Naive thymus-derived CD4-positive, alpha-beta T cell (primary cell): ENCODE measurements at regions of chr1 and their contacts with region 1.

Region 1: GRCh38 chr1:10694633-10695627 is 101.5 kb downstream of the CASZ1 start:
- DNase-seq: peak; percentile 60 to 82 (median 71)
- ATAC-seq: peak; percentile 81
- H3K4me3 ChIP-seq: peak overlapping the region; percentile 41
- H3K4me3 Mint-ChIP-seq: peak overlapping the region; percentile 74 to 87 (median 84)
- H3K27ac ChIP-seq: peak overlapping the region; percentile 58
- H3K27ac Mint-ChIP-seq: peak overlapping the region in 6 of 9 donors; percentile 71 to 92 (median 81)
- H3K4me1 ChIP-seq: peaks cover 10 to 15% of the 10 kb centered on the region in 2 donors
- H3K4me1 Mint-ChIP-seq: peaks cover 14 to 20% (median 16%) of the 10 kb centered on the region in 7 donors
- H3K27me3 ChIP-seq: no peaks in the 10 kb centered on the region
- H3K27me3 Mint-ChIP-seq: peaks cover 0 to 21% (median 0%) of the 10 kb centered on the region in 5 donors

Region 2: GRCh38 chr1:9128520-9129265 is 1566.2 kb before region 1 on chr1 and contains the start of gene GPR157:
- CTCF ChIA-PET with region 1: no interaction called
- POLR2A ChIA-PET with region 1: no interaction called
- intact Hi-C with region 1: loop called in 1 of 2 experiments (anchors 5 kb)
- DNase-seq: peak; percentile 53 to 82 (median 70)
- ATAC-seq: peak; percentile 95
- H3K4me3 ChIP-seq: peak within 1 kb of the TSS; percentile 67
- H3K4me3 Mint-ChIP-seq: peak within 1 kb of the TSS; percentile 85 to 95 (median 90)
- H3K27ac ChIP-seq: peak within 1 kb of the TSS; percentile 67
- H3K27ac Mint-ChIP-seq: peak within 1 kb of the TSS; percentile 59 to 94 (median 87)
- H3K4me1 ChIP-seq: peaks cover 8 to 24% of the 10 kb centered on the region in 2 donors
- H3K4me1 Mint-ChIP-seq: peaks cover 19 to 40% (median 32%) of the 10 kb centered on the region in 7 donors
- H3K27me3 ChIP-seq: no peaks in the 10 kb centered on the region
- H3K27me3 Mint-ChIP-seq: peaks cover 0 to 25% (median 0%) of the 10 kb centered on the region in 5 donors
- total RNA-seq, gene GPR157: 4.0 to 14.1 (median 5.9) TPM

Region 3: GRCh38 chr1:10398734-10399623 is 296.0 kb before region 1 on chr1 and contains the start of gene PGD:
- CTCF ChIA-PET with region 1: no interaction called
- POLR2A ChIA-PET with region 1: no interaction called
- intact Hi-C with region 1: loop called in 1 of 2 experiments (anchors 1 kb)
- DNase-seq: peak; percentile 87 to 98 (median 94)
- ATAC-seq: peak; percentile 99
- H3K4me3 ChIP-seq: peak within 1 kb of the TSS; percentile 95
- H3K4me3 Mint-ChIP-seq: peak within 1 kb of the TSS; percentile 87 to 97 (median 96)
- H3K27ac ChIP-seq: peak within 1 kb of the TSS; percentile 86
- H3K27ac Mint-ChIP-seq: peak within 1 kb of the TSS; percentile 63 to 94 (median 82)
- H3K4me1 ChIP-seq: peaks cover 4 to 7% of the 10 kb centered on the region in 2 donors
- H3K4me1 Mint-ChIP-seq: peaks cover 10 to 30% (median 25%) of the 10 kb centered on the region in 7 donors
- H3K27me3 ChIP-seq: no peaks in the 10 kb centered on the region
- H3K27me3 Mint-ChIP-seq: no peaks in the 10 kb centered on the region
- total RNA-seq, gene PGD: 42.0 to 110 (median 48.5) TPM

Region 4: DNA sequence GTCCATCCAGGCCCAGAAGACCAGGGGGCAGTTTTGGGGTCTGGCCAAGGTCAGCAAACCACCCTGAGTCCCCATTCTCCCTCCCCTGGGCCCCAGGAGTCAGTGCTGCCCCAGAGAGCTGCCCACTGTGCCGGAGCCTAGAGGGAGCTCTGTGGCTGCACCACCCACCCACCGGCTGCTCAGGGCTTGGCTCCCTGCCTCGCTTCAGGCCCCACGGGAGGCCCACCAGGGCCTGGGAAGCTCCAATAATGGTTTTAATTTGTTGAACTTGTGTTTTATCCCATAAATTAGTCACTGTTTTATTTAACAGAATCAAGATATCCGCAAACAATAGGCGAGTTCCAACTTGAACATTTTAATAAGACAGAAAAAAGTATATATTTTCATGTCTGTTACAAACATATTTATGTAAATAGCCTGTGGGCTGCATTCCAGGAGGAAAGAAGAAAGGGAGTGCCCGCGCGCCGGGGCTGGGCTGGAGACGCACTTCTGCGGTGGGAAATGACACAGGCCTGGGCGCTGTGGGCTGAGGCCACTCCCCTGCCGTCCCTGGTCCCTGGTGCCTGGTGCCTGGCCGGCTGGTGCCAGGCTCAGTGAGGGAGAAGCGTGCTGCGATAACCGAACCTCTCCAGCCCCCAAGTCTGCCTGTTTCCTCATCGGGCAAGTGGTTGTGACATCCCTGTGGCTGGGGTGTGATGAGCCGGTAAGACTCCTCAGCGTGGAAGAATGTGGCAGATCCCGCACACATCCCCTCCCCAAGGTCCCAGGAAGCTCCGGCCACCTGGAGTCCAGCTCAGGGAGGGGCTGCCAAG is 59.6 kb before region 1 on chr1:
- CTCF ChIA-PET with region 1: no interaction called
- POLR2A ChIA-PET with region 1: no interaction called
- intact Hi-C with region 1: no loop called
- DNase-seq: no peak
- ATAC-seq: no peak
- H3K4me3 ChIP-seq: no peak overlapping the region
- H3K4me3 Mint-ChIP-seq: no peak overlapping the region
- H3K27ac ChIP-seq: no peak overlapping the region
- H3K27ac Mint-ChIP-seq: no peak overlapping the region
- H3K4me1 ChIP-seq: peaks cover 0 to 4% of the 10 kb centered on the region in 2 donors
- H3K4me1 Mint-ChIP-seq: peaks cover 0 to 8% (median 3%) of the 10 kb centered on the region in 7 donors
- H3K27me3 ChIP-seq: no peaks in the 10 kb centered on the region
- H3K27me3 Mint-ChIP-seq: peaks cover 0 to 11% (median 0%) of the 10 kb centered on the region in 5 donors

Region 5: DNA sequence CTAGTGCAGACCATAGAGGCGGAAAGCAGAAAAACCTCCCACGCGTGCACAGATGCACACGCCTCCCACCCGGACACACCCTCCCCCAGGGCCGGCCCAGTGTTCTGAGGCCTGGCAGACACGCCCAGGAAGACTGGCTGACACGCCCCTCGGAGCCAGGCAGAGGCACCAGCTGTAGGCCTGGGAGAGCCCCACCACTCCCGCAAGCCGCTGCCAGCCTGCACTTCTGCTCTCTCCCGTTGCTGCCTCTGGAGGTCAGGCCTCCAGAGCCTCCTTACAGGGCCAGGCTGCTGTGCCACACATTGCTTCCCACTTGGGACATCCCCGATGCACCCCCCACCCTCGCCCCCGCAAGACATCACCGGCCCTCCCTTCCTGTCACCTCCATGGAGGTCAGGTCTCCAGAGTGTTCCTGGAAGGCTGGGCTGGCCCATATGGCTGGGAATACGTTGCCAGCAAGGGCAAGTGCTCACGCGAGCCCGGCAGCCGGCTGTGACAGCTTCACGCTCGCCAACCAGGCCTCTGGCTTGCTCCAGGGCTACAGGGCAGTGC is 61.1 kb after region 1 on chr1:
- CTCF ChIA-PET with region 1: no interaction called
- POLR2A ChIA-PET with region 1: no interaction called
- intact Hi-C with region 1: loop called in 1 of 2 experiments (anchors 2 kb)
- DNase-seq: peak; percentile 43 to 78 (median 72)
- ATAC-seq: peak; percentile 97
- H3K4me3 ChIP-seq: no peak overlapping the region
- H3K4me3 Mint-ChIP-seq: peak overlapping the region in 5 of 10 donors; percentile 10 to 53 (median 46)
- H3K27ac ChIP-seq: no peak overlapping the region
- H3K27ac Mint-ChIP-seq: peak overlapping the region in 1 of 9 donors; percentile 24
- H3K4me1 ChIP-seq: peaks cover 3 to 8% of the 10 kb centered on the region in 2 donors
- H3K4me1 Mint-ChIP-seq: peaks cover 0 to 25% (median 5%) of the 10 kb centered on the region in 7 donors
- H3K27me3 ChIP-seq: no peaks in the 10 kb centered on the region
- H3K27me3 Mint-ChIP-seq: peaks cover 0 to 5% (median 0%) of the 10 kb centered on the region in 5 donors

Region 6: GRCh38 chr1:10779201-10779600 is 84.3 kb after region 1 on chr1:
- CTCF ChIA-PET with region 1: no interaction called
- POLR2A ChIA-PET with region 1: no interaction called
- intact Hi-C with region 1: no loop called
- DNase-seq: no peak
- ATAC-seq: no peak
- H3K4me3 ChIP-seq: no peak overlapping the region
- H3K4me3 Mint-ChIP-seq: no peak overlapping the region
- H3K27ac ChIP-seq: no peak overlapping the region
- H3K27ac Mint-ChIP-seq: no peak overlapping the region
- H3K4me1 ChIP-seq: no peaks in the 10 kb centered on the region
- H3K4me1 Mint-ChIP-seq: no peaks in the 10 kb centered on the region
- H3K27me3 ChIP-seq: no peaks in the 10 kb centered on the region
- H3K27me3 Mint-ChIP-seq: peaks cover 0 to 2% (median 0%) of the 10 kb centered on the region in 5 donors

Region 7: GRCh38 chr1:10941891-10942541 is 247.1 kb after region 1 on chr1:
- CTCF ChIA-PET with region 1: interaction called, 3 read pairs
- POLR2A ChIA-PET with region 1: no interaction called
- intact Hi-C with region 1: loop called (anchors 1 to 2 kb)
- DNase-seq: peak; percentile 23 to 75 (median 53)
- ATAC-seq: peak; percentile 78
- H3K4me3 ChIP-seq: no peak overlapping the region
- H3K4me3 Mint-ChIP-seq: peak overlapping the region in 1 of 10 donors; percentile 21
- H3K27ac ChIP-seq: no peak overlapping the region
- H3K27ac Mint-ChIP-seq: no peak overlapping the region
- H3K4me1 ChIP-seq: peaks cover 11 to 29% of the 10 kb centered on the region in 2 donors
- H3K4me1 Mint-ChIP-seq: peaks cover 20 to 49% (median 32%) of the 10 kb centered on the region in 7 donors
- H3K27me3 ChIP-seq: no peaks in the 10 kb centered on the region
- H3K27me3 Mint-ChIP-seq: peaks cover 19 to 72% (median 21%) of the 10 kb centered on the region in 5 donors

Region 8: DNA sequence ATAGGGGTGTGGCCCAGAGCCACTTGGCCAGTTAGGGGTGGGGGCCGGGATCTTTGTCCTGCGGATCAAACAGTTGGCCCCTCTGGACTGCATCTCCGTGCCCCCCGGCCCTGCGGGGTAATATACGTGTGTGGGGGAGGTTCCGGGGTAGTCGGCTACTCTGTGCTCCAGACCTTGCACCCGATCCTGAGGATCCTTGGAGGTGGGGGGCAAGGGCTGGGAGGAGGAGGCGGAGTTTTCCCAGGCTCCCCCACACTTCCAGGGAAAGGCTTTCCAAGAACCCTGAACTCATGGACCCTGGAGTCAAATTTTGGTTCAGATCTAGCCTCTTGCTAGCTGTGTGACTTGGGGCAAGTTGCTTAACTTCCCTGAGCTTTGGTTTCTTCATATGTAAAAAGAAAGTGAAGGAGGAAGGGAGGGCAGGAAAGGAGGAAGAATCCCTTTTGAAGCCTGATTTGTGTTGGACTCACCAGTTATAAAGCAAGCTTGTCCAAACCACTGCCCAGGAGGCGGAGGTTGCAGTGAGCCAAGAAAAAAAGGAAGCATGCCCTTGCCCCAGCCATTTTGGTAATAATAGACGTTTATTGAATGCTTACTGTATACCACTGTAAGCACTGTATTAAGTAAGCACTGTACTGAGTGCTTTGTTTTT is 1325.1 kb after region 1 on chr1:
- CTCF ChIA-PET with region 1: no interaction called
- POLR2A ChIA-PET with region 1: no interaction called
- intact Hi-C with region 1: loop called in 1 of 2 experiments (anchors 10 kb)
- DNase-seq: no peak
- ATAC-seq: no peak
- H3K4me3 ChIP-seq: peak overlapping the region; percentile 77
- H3K4me3 Mint-ChIP-seq: peak overlapping the region; percentile 82 to 99 (median 92)
- H3K27ac ChIP-seq: peak overlapping the region; percentile 73
- H3K27ac Mint-ChIP-seq: peak overlapping the region in 8 of 9 donors; percentile 43 to 97 (median 89)
- H3K4me1 ChIP-seq: no peaks in the 10 kb centered on the region
- H3K4me1 Mint-ChIP-seq: peaks cover 0 to 35% (median 17%) of the 10 kb centered on the region in 7 donors
- H3K27me3 ChIP-seq: no peaks in the 10 kb centered on the region
- H3K27me3 Mint-ChIP-seq: peaks cover 0 to 3% (median 0%) of the 10 kb centered on the region in 5 donors